CD4-positive, alpha-beta memory T cell (primary cell): ENCODE measurements at regions of chr18 and their contacts with region 1.

Region 1: DNA sequence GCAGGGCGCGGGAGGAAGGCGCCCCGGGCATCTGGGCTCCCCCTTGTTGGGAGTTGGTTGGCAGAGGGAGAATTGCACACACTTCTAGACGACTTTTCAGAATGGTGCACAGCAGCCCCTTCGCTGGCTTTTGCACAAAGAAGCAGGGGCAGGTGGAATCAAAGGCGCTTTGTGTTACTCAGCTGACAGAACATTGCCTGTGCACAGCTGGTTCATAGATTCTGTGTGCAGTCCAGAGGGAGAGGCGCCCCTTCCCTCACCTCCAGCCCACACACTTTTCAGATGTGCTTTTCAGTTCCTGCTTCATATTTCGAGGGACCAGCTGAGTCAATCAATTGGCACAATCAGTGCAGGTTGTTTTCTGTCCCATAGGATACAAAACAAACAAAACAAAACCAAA is 348.4 kb upstream of the RAB12 start:
- DNase-seq: no peak
- H3K4me3 ChIP-seq: no peak overlapping the region
- H3K4me3 Mint-ChIP-seq: no peak overlapping the region
- H3K27ac ChIP-seq: no peak overlapping the region
- H3K27ac Mint-ChIP-seq: no peak overlapping the region
- H3K4me1 ChIP-seq: no peaks in the 10 kb centered on the region
- H3K4me1 Mint-ChIP-seq: peaks cover 0 to 2% (median 0%) of the 10 kb centered on the region in 4 donors
- H3K27me3 ChIP-seq: no peaks in the 10 kb centered on the region
- H3K27me3 Mint-ChIP-seq: no peaks in the 10 kb centered on the region

Region 2: DNA sequence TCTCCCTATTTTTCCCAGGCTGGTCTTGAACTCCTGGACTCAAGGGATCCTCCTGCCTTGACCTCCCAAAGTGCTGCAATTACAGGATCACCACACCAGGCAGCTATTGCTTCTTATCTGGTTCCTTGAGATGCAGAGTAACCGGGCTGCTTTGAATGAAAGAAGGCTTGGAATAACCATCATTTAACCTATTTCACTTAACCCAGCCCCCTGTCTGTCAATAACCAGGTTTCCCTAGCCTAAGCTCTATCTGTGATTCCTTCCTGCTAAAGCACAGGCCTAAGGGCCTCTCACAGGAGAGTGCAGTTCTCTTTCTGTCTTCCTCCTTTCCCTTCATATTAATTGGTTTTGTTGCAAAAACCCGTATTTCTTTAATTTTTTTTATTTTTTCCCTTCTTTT is 45.1 kb before region 1 on chr18:
- CTCF ChIA-PET with region 1: no interaction called
- POLR2A ChIA-PET with region 1: no interaction called
- intact Hi-C with region 1: loop called (anchors 1 kb)
- DNase-seq: no peak
- H3K4me3 ChIP-seq: no peak overlapping the region
- H3K4me3 Mint-ChIP-seq: no peak overlapping the region
- H3K27ac ChIP-seq: no peak overlapping the region
- H3K27ac Mint-ChIP-seq: no peak overlapping the region
- H3K4me1 ChIP-seq: no peaks in the 10 kb centered on the region
- H3K4me1 Mint-ChIP-seq: peaks cover 0 to 3% (median 0%) of the 10 kb centered on the region in 4 donors
- H3K27me3 ChIP-seq: no peaks in the 10 kb centered on the region
- H3K27me3 Mint-ChIP-seq: no peaks in the 10 kb centered on the region